ENCODE measurements at regions of chr7 and their contacts with region 1.

Region 1: GRCh38 chr7:30731619-30732018 is 20.3 kb upstream of the INMT start:
- DNase-seq: no peak
- ATAC-seq: no peak
- H3K4me3 ChIP-seq: no peak overlapping the region
- H3K27ac ChIP-seq: no peak overlapping the region
- H3K4me1 ChIP-seq: no peaks in the 10 kb centered on the region
- H3K27me3 ChIP-seq: peaks cover 0 to 5% (median 0%) of the 10 kb centered on the region in 7 donors
- CTCF ChIP-seq: no peak

Region 2: GRCh38 chr7:30531286-30531685 is 200.3 kb before region 1 on chr7:
- intact Hi-C with region 1: no loop called
- DNase-seq: no peak
- ATAC-seq: no peak
- H3K4me3 ChIP-seq: no peak overlapping the region
- H3K27ac ChIP-seq: no peak overlapping the region
- H3K4me1 ChIP-seq: peaks cover 0 to 7% (median 0%) of the 10 kb centered on the region in 9 donors
- H3K27me3 ChIP-seq: no peaks in the 10 kb centered on the region
- CTCF ChIP-seq: no peak

Region 3: GRCh38 chr7:30625283-30625682 is 106.3 kb before region 1 on chr7:
- intact Hi-C with region 1: loop called in 4 of 10 experiments (anchors 10 kb)
- DNase-seq: no peak
- ATAC-seq: no peak
- H3K4me3 ChIP-seq: no peak overlapping the region
- H3K27ac ChIP-seq: no peak overlapping the region
- H3K4me1 ChIP-seq: no peaks in the 10 kb centered on the region
- H3K27me3 ChIP-seq: no peaks in the 10 kb centered on the region
- CTCF ChIP-seq: peak in 7 of 9 donors; percentile 20 to 50 (median 30)

Region 4: DNA sequence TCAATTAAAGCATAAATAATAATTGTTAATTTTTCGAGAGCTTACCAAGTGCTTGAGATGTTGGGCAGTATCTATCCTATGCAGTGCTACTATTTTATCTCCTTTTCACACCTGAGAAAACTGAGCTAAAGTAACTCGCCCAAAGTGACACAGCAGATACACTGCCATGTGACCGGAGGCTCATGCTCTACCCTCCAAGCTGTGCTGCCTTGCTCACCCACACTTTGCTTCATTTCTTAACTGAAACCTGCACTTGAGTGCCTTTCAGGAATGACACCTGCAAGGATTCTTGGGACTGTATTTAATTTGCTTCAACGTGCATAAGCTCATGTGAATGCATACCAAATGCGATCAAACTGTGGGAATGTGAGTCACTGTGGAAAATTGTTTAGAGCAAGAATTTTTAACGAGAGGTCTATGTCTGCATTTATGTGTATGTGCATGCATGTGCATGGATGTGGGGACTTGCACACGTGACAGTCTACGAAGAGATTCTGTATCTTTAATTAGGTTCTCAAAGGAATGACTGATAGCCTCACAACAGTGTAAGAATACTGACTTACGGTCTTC is 439.7 kb after region 1 on chr7:
- intact Hi-C with region 1: no loop called
- DNase-seq: no peak
- ATAC-seq: no peak
- H3K4me3 ChIP-seq: no peak overlapping the region
- H3K27ac ChIP-seq: no peak overlapping the region
- H3K4me1 ChIP-seq: no peaks in the 10 kb centered on the region
- H3K27me3 ChIP-seq: peaks cover 0 to 52% (median 24%) of the 10 kb centered on the region in 7 donors
- CTCF ChIP-seq: no peak